A549 (cell line): ENCODE measurements at regions of chr6 and their contacts with region 1.

Region 1: GRCh38 chr6:797479-798077 is 104.6 kb upstream of the EXOC2 start:
- DNase-seq: peak; percentile 7 to 51
- ATAC-seq: peak; percentile 68 to 71; a peak in 4 of 6 replicates
- H3K4me3 ChIP-seq: no peak overlapping the region
- H3K27ac ChIP-seq: peak overlapping the region; percentile 46 to 67; a peak in 5 of 6 replicates
- H3K4me1 ChIP-seq: no peaks in the 10 kb centered on the region
- CTCF ChIP-seq: peak; percentile 77
- EP300 ChIP-seq: no peak
- POLR2A ChIP-seq: no peak
- RAD21 ChIP-seq: peak; percentile 82 to 90

Region 2: DNA sequence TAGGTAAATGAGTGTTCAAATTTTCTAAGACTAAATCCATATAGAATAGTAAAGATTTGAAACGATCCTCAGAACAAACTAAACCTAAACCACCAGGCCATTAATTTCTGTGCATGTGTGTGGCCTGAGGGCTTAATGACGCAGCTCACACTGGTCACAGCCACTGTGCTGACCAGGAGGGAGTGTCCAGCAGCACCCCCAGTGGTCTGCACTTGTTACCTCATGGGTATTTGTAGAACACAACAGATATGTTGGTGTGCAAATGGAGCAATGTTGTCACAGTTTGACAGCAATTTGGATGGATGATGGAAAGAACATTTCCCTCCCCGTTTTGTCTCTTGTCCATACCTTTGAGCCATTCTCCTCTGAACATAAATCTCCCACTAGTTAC is 17.8 kb after region 1 on chr6:
- CTCF ChIA-PET with region 1: interaction called, 12 read pairs
- POLR2A ChIA-PET with region 1: no interaction called
- DNase-seq: no peak
- ATAC-seq: no peak
- H3K4me3 ChIP-seq: no peak overlapping the region
- H3K27ac ChIP-seq: no peak overlapping the region
- H3K4me1 ChIP-seq: peaks cover 18% of the 10 kb centered on the region; the same call in 2 of the 3 replicates
- CTCF ChIP-seq: no peak
- EP300 ChIP-seq: no peak
- POLR2A ChIP-seq: no peak
- RAD21 ChIP-seq: no peak

Region 3: DNA sequence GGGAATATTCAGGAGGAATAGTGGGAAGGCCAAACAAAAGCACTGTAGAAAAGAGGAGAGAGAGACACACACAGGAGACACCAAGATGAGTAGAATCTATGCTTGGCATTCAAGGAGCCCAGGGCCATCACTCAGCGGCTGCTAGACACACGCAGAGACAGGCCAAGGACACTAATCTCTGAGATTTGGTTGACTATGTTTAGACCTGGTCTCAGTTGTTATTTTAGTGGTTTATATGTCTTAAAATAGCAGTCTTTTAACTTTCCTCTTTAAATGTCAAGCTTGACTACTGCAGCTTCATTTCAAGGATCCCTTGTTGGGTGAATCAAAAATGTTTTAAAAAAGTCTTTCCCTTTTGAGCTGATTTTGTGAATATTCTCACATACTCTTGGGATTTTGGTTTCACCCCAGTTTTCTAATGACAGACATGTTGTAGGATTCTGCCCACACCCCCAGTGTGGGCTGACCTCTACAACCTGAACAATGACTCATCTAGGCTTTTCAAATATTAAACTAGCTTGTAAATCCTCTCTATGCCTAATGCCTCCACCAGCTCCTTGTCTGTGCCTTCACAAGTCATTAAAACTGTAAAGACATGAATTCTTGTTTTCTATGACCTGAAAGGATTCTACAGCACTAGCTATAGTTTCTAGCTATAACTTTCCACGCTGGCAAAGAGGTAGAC is 38.0 kb after region 1 on chr6:
- CTCF ChIA-PET with region 1: interaction called, 14 read pairs
- POLR2A ChIA-PET with region 1: no interaction called
- DNase-seq: peak; percentile 18 to 45
- ATAC-seq: peak; percentile 72 to 80; a peak in 5 of 6 replicates
- H3K4me3 ChIP-seq: no peak overlapping the region
- H3K27ac ChIP-seq: peak overlapping the region; percentile 78 to 84
- H3K4me1 ChIP-seq: peaks cover 41% of the 10 kb centered on the region
- CTCF ChIP-seq: no peak
- EP300 ChIP-seq: no peak
- POLR2A ChIP-seq: no peak
- RAD21 ChIP-seq: no peak

Region 4: GRCh38 chr6:1311400-1312202 is 514.0 kb after region 1 on chr6 and contains the start of gene FOXQ1:
- CTCF ChIA-PET with region 1: interaction called, 14 read pairs
- POLR2A ChIA-PET with region 1: no interaction called
- DNase-seq: peak in 1 of 2 experiments; percentile 66
- ATAC-seq: peak; percentile 68 to 81
- H3K4me3 ChIP-seq: peak within 1 kb of the TSS; percentile 64
- H3K27ac ChIP-seq: peak within 1 kb of the TSS; percentile 79 to 91
- H3K4me1 ChIP-seq: peaks cover 12% of the 10 kb centered on the region
- CTCF ChIP-seq: no peak
- EP300 ChIP-seq: no peak
- POLR2A ChIP-seq: peak; percentile 66
- RAD21 ChIP-seq: peak in 1 of 2 experiments; percentile 27; a peak in 2 of 5 replicates
- polyA plus RNA-seq, gene FOXQ1: 2.1 and 3.5 TPM in 2 replicates

Region 5: DNA sequence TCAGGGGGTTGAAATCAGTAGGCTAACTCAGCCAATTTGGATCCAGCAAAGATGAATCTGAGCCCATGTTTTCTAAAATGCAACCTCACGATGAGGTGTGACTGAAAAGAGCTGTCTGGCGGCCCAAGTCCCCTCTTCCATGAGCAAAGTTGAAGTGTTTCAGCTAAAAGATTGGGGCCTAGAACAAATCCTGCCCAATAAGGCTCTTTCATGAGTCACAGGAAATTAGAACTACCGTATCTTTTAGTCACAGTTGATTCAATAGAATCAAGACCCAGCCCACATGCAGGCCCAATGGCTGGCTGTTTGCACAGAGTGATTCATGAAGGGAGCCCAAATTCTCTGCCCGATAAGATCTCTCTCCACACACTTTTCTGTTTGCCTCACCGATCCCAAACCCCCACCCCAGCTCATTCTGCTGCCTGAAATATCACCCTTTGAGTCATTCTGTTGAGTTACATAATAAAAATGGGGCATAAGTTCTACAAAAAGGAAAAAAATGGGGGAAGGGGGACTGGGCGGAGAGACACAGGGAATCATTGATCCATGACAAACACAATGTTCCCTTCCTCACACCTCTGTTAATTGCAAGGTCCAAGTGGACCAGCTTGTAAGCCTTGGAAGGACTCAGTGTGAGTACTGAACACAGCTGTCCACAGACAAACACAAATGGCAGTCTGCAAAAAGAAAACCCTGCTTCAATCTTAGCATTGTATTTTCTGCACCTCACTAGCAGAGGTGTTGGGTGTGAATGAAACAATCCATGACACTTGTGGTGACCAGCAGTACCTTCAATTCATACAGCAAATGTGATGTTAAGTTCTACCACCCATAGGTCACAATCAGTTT is 528.1 kb after region 1 on chr6:
- CTCF ChIA-PET with region 1: interaction called, 10 read pairs
- POLR2A ChIA-PET with region 1: no interaction called
- DNase-seq: peak; percentile 77 to 93
- ATAC-seq: peak; percentile 96
- H3K4me3 ChIP-seq: no peak overlapping the region
- H3K27ac ChIP-seq: peak overlapping the region; percentile 80 to 84
- H3K4me1 ChIP-seq: peaks cover 61% of the 10 kb centered on the region
- CTCF ChIP-seq: no peak
- EP300 ChIP-seq: peak; percentile 77 to 90; a peak in 3 of 5 replicates
- POLR2A ChIP-seq: no peak
- RAD21 ChIP-seq: peak; percentile 19 to 30; a peak in 4 of 5 replicates

Region 6: DNA sequence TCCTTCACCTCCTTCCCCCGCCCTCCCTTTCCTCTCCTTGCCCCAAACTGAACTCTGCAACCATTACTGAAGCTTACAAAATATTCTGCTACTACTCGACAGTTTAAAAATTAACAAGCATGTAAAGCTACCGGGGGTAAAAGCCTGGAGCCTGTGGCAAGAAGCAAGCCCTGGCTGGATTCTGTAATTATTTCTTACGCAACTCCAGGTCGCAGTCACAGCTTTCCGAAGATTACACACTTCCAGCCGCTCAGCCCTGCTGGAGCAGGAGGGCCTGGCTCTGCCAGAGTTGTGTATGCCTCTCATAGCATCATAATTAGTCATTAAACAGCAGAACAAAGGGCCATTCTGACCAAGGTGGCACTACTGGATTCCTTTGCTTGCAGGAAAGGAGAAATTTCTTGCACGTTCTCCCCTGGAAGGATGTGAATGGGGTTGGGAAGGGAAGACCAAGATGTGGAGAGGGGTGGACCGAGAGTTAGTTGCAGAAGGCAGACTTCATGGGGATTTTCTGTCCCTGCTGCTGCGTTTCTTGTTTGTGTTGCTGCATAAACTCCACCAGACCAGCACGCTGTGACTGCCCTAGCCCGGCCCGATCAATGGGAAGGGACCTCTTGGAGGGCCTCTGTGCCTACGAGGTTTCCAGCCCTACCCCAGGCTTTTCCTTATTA is 537.9 kb after region 1 on chr6:
- CTCF ChIA-PET with region 1: interaction called, 12 read pairs
- POLR2A ChIA-PET with region 1: no interaction called
- DNase-seq: peak in 1 of 2 experiments; percentile 77
- ATAC-seq: peak; percentile 89 to 95
- H3K4me3 ChIP-seq: no peak overlapping the region
- H3K27ac ChIP-seq: peak overlapping the region; percentile 73 to 85
- H3K4me1 ChIP-seq: peaks cover 31% of the 10 kb centered on the region
- CTCF ChIP-seq: no peak
- EP300 ChIP-seq: peak; percentile 74 to 76; a peak in 3 of 5 replicates
- POLR2A ChIP-seq: no peak
- RAD21 ChIP-seq: peak; percentile 5 to 55; a peak in 3 of 5 replicates